GM12878 (cell line): ENCODE measurements at regions of chr15 and their contacts with region 1.

Region 1: DNA sequence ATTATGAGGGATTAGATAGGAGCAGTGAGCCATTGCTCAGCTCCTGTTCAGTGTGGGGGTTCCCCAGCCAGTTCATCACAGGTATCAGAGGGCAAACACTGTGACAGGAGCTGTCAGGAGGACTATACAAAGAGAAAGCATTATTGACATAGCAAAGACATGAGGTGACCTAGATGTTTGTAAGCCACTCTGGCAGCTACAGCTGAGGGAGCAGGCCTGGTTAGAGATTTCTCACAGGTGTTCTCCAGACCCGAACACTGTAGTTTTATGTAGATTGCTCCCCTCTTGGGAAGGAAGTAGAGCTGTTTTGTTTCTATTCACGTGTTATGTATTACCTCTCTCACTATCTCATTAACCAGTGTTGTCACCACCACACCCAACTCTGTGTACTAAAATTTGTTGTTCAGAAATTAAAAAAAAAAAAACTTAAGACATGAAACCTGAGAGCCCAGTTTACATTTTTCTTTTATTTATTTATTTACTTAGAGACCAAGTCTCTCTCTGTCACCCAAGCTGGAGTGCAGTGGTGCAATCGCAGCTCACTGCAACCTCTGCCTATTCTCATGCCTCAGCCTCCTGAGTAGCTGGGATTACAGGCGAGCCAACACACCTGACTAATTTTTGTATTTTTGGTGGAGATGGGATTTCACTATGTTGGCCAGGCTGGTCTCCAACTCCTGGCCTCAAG is 123.7 kb downstream of the RBPMS2 start:
- DNase-seq: peak; percentile 82
- ATAC-seq: peak; percentile 96
- H3K4me3 ChIP-seq: peak overlapping the region; percentile 15; the same call in 1 of the 2 replicates
- H3K27ac ChIP-seq: peak overlapping the region; percentile 74
- H3K4me1 ChIP-seq: peaks cover 25% of the 10 kb centered on the region
- H3K27me3 ChIP-seq: no peaks in the 10 kb centered on the region
- CTCF ChIP-seq: no peak
- EP300 ChIP-seq: no peak
- POLR2A ChIP-seq: 0 out of 2 replicates have a peak, but pooled peaks have one; percentile 26
- RAD21 ChIP-seq: 0 out of 2 replicates have a peak, but pooled peaks have one; percentile 20

Region 2: GRCh38 chr15:64209680-64210334 is 441.9 kb before region 1 on chr15:
- CTCF ChIA-PET with region 1: interaction called, 11 read pairs
- POLR2A ChIA-PET with region 1: no interaction called
- RAD21 ChIA-PET with region 1: interaction called, 3 read pairs
- SMC1A ChIA-PET with region 1: interaction called, 7 read pairs
- in situ Hi-C with region 1: loop called (anchors 25 kb)
- intact Hi-C with region 1: loop called (anchors 10 kb)
- DNase-seq: peak; percentile 9
- ATAC-seq: peak; percentile 72
- H3K4me3 ChIP-seq: no peak overlapping the region
- H3K27ac ChIP-seq: no peak overlapping the region
- H3K4me1 ChIP-seq: no peaks in the 10 kb centered on the region
- H3K27me3 ChIP-seq: no peaks in the 10 kb centered on the region
- CTCF ChIP-seq: peak; percentile 29 to 54 (median 32); a peak in 4 of 6 replicates
- EP300 ChIP-seq: no peak
- POLR2A ChIP-seq: no peak
- RAD21 ChIP-seq: peak; percentile 78

Region 3: DNA sequence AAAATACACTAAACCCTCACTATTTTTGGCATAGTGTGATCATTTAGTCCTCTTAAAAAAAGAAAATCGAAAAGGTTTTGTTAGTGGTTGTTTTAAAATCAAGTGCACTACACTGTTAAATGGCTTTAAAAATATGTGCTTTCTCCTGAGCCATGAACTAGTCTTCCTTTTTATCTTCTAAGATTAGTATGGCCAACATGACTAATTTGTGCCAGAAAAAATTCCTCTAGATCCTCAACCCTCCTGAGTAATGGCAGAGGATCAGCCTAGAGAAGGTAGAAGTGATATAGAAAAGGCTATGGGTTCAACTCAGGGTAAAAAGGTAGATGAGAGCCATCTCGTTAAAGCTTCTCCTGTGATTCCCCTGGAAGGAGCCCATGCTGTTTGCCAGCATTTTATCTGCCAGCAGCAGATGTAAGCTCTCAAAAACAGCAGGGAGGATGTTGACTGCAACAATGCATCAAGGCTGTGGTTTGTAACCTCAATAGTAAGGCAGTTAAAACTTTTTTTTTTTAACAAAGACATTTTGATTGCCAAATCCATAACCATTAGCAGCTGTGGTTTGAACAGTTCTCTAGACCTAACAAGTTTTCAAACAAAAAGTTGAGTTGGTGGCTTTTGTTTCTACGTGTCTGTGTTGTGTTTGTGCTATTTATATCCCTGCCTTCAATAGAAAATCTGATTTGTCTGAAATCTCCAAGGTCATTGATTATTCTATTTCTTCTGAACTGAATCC is 221.5 kb before region 1 on chr15:
- CTCF ChIA-PET with region 1: interaction called, 60 read pairs
- POLR2A ChIA-PET with region 1: interaction called, 4 read pairs
- RAD21 ChIA-PET with region 1: interaction called, 39 read pairs
- SMC1A ChIA-PET with region 1: interaction called, 49 read pairs
- in situ Hi-C with region 1: no loop called
- intact Hi-C with region 1: loop called (anchors 5 kb)
- DNase-seq: peak; percentile 65
- ATAC-seq: peak; percentile 87
- H3K4me3 ChIP-seq: 0 out of 2 replicates have a peak overlapping the region, but pooled peaks have one; percentile 6
- H3K27ac ChIP-seq: peak overlapping the region; percentile 87
- H3K4me1 ChIP-seq: peaks cover 19% of the 10 kb centered on the region
- H3K27me3 ChIP-seq: no peaks in the 10 kb centered on the region
- CTCF ChIP-seq: no peak
- EP300 ChIP-seq: peak in 1 of 2 experiments; percentile 55; a peak in 2 of 4 replicates
- POLR2A ChIP-seq: no peak
- RAD21 ChIP-seq: no peak

Region 4: DNA sequence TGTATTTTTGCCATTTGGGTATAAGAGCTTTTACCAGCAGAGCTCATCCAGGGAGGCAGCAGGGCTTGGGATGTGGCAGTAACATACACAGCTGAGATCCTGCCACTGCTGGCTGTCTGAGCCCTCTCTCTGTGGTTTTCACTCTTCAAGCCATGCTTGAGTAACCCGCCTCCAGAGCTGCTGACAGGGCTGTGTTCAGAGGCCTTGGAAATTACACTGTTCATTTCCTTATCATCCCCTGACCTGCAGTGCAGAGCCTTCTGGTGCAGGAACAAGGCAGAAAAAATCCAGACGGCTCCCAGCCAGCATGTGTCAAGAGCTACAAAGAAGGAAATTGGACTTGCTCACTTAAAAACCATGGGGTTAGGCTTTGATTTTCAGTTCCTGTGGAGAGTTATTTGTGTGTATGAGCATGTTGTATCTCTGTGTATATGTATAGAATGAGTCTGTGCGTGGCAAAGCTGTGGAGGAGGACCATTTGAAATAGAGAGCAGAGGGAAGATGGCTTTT is 144.4 kb before region 1 on chr15:
- CTCF ChIA-PET with region 1: interaction called, 8 read pairs
- POLR2A ChIA-PET with region 1: no interaction called
- RAD21 ChIA-PET with region 1: interaction called, 18 read pairs
- SMC1A ChIA-PET with region 1: interaction called, 51 read pairs
- in situ Hi-C with region 1: no loop called
- intact Hi-C with region 1: no loop called
- DNase-seq: peak; percentile 48
- ATAC-seq: peak; percentile 93
- H3K4me3 ChIP-seq: no peak overlapping the region
- H3K27ac ChIP-seq: peak overlapping the region; percentile 76
- H3K4me1 ChIP-seq: peaks cover 30% of the 10 kb centered on the region
- H3K27me3 ChIP-seq: no peaks in the 10 kb centered on the region
- CTCF ChIP-seq: no peak
- EP300 ChIP-seq: 0 out of 4 replicates have a peak, but pooled peaks of 1 of the 2 experiments have one; percentile 8
- POLR2A ChIP-seq: no peak
- RAD21 ChIP-seq: no peak

Region 5: GRCh38 chr15:64571857-64572291 is 79.8 kb before region 1 on chr15:
- CTCF ChIA-PET with region 1: interaction called, 5 read pairs
- POLR2A ChIA-PET with region 1: interaction called, 9 read pairs
- RAD21 ChIA-PET with region 1: interaction called, 15 read pairs
- SMC1A ChIA-PET with region 1: interaction called, 13 read pairs
- in situ Hi-C with region 1: no loop called
- intact Hi-C with region 1: loop called (anchors 5 kb)
- DNase-seq: peak; percentile 92
- ATAC-seq: peak; percentile 83
- H3K4me3 ChIP-seq: no peak overlapping the region
- H3K27ac ChIP-seq: peak overlapping the region; percentile 75
- H3K4me1 ChIP-seq: peaks cover 43% of the 10 kb centered on the region
- H3K27me3 ChIP-seq: no peaks in the 10 kb centered on the region
- CTCF ChIP-seq: no peak
- EP300 ChIP-seq: 0 out of 4 replicates have a peak, but pooled peaks of 1 of the 2 experiments have one; percentile 29
- POLR2A ChIP-seq: no peak
- RAD21 ChIP-seq: no peak

Region 6: GRCh38 chr15:64640146-64640871 is 11.4 kb before region 1 on chr15:
- CTCF ChIA-PET with region 1: interaction called, 93 read pairs
- POLR2A ChIA-PET with region 1: interaction called, 63 read pairs
- RAD21 ChIA-PET with region 1: interaction called, 239 read pairs
- SMC1A ChIA-PET with region 1: interaction called, 234 read pairs
- in situ Hi-C with region 1: no loop called
- intact Hi-C with region 1: no loop called
- DNase-seq: no peak
- ATAC-seq: no peak
- H3K4me3 ChIP-seq: no peak overlapping the region
- H3K27ac ChIP-seq: no peak overlapping the region
- H3K4me1 ChIP-seq: peaks cover 22% of the 10 kb centered on the region
- H3K27me3 ChIP-seq: no peaks in the 10 kb centered on the region
- CTCF ChIP-seq: no peak
- EP300 ChIP-seq: no peak
- POLR2A ChIP-seq: no peak
- RAD21 ChIP-seq: no peak